Mammary epithelial cell (primary cell): ENCODE measurements at regions of chr3 and their contacts with region 1.

Region 1: GRCh38 chr3:10164546-10165393 is at the start of gene IRAK2:
- DNase-seq: peak; percentile 49
- H3K4me3 ChIP-seq: peak within 1 kb of the TSS; percentile 79 to 100 (median 95)
- H3K27ac ChIP-seq: peak within 1 kb of the TSS; percentile 21
- H3K4me1 ChIP-seq: peaks cover 5% of the 10 kb centered on the region
- H3K27me3 ChIP-seq: no peaks in the 10 kb centered on the region
- CTCF ChIP-seq: peak; percentile 38 to 67
- total RNA-seq, gene IRAK2: 2.5 to 16.9 TPM

Region 2: GRCh38 chr3:9792405-9793160 is 372.2 kb before region 1 on chr3 and contains the starts of genes ARPC4 and TADA3:
- CTCF ChIA-PET with region 1: no interaction called
- dilution Hi-C with region 1: no loop called
- in situ Hi-C with region 1: no loop called
- intact Hi-C with region 1: no loop called
- DNase-seq: peak; percentile 93
- H3K4me3 ChIP-seq: peak within 1 kb of the TSS; percentile 73 to 80 (median 76)
- H3K27ac ChIP-seq: peak within 1 kb of the TSS; percentile 95
- H3K4me1 ChIP-seq: peaks cover 16% of the 10 kb centered on the region
- H3K27me3 ChIP-seq: no peaks in the 10 kb centered on the region
- CTCF ChIP-seq: no peak
- total RNA-seq, gene ARPC4: 135 to 202 TPM
- total RNA-seq, gene TADA3: 57.5 to 75.5 TPM

Region 3: GRCh38 chr3:10115326-10116137 is 49.2 kb before region 1 on chr3 and contains the start of gene BRK1:
- CTCF ChIA-PET with region 1: no interaction called
- dilution Hi-C with region 1: loop called (anchors 5 kb)
- in situ Hi-C with region 1: no loop called
- intact Hi-C with region 1: no loop called
- DNase-seq: peak; percentile 93
- H3K4me3 ChIP-seq: peak within 1 kb of the TSS; percentile 82 to 99 (median 88)
- H3K27ac ChIP-seq: peak within 1 kb of the TSS; percentile 77
- H3K4me1 ChIP-seq: peaks cover 8% of the 10 kb centered on the region
- H3K27me3 ChIP-seq: no peaks in the 10 kb centered on the region
- CTCF ChIP-seq: no peak
- total RNA-seq, gene BRK1: 80.4 to 134 TPM

Region 4: GRCh38 chr3:10142707-10143566 is 21.8 kb before region 1 on chr3:
- CTCF ChIA-PET with region 1: no interaction called
- dilution Hi-C with region 1: no loop called
- in situ Hi-C with region 1: no loop called
- intact Hi-C with region 1: no loop called
- DNase-seq: peak; percentile 29
- H3K4me3 ChIP-seq: peak overlapping the region; percentile 48 to 95 (median 67)
- H3K27ac ChIP-seq: no peak overlapping the region
- H3K4me1 ChIP-seq: peaks cover 7% of the 10 kb centered on the region
- H3K27me3 ChIP-seq: no peaks in the 10 kb centered on the region
- CTCF ChIP-seq: no peak

Region 5: DNA sequence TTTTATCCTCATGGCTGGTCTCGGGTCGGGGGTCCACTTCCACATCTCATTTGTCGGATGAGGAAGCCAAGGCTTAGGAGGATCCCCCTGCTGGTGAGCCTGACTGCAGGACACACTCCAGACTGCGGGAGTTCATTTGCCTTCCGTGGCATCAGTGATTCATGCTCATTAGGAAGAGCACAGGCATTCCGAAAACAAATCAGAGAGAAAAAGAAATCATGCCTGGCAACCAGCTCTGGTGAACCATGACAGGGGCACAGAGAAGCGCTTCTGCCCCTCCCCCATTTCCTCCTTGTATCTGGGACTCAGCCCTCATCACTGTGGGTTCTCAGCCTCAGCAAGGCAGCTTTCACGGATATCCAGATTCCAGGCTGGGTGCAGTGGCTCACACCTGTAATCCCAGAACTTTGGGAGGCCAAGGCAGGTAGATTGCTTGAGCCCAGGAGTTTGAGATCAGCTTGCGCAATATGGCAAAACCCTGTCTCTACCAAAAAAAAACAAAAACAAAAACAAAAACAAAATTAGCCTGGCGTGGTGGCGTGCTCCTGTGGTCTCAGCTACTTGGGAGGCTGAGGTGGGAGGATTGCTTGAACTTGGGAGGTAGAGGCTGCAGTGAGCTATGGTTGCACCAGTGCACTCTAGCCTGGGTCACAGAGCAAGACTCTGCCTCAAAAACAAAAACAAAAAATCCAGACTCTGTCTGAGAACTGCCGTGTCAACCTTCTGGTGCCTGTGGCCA is 28.4 kb after region 1 on chr3:
- CTCF ChIA-PET with region 1: no interaction called
- dilution Hi-C with region 1: no loop called
- in situ Hi-C with region 1: no loop called
- intact Hi-C with region 1: loop called (anchors 2 kb)
- DNase-seq: peak; percentile 64
- H3K4me3 ChIP-seq: no peak overlapping the region
- H3K27ac ChIP-seq: peak overlapping the region; percentile 99
- H3K4me1 ChIP-seq: peaks cover 68% of the 10 kb centered on the region
- H3K27me3 ChIP-seq: no peaks in the 10 kb centered on the region
- CTCF ChIP-seq: peak; percentile 49 to 51

Region 6: GRCh38 chr3:10205451-10206165 is 40.8 kb after region 1 on chr3:
- CTCF ChIA-PET with region 1: interaction called, 4 read pairs
- dilution Hi-C with region 1: no loop called
- in situ Hi-C with region 1: no loop called
- intact Hi-C with region 1: loop called (anchors 5 kb)
- DNase-seq: peak; percentile 95
- H3K4me3 ChIP-seq: no peak overlapping the region
- H3K27ac ChIP-seq: peak overlapping the region; percentile 95
- H3K4me1 ChIP-seq: peaks cover 29% of the 10 kb centered on the region
- H3K27me3 ChIP-seq: no peaks in the 10 kb centered on the region
- CTCF ChIP-seq: no peak